ENCODE measurements at regions of chr16 and their contacts with region 1.

Region 1: DNA sequence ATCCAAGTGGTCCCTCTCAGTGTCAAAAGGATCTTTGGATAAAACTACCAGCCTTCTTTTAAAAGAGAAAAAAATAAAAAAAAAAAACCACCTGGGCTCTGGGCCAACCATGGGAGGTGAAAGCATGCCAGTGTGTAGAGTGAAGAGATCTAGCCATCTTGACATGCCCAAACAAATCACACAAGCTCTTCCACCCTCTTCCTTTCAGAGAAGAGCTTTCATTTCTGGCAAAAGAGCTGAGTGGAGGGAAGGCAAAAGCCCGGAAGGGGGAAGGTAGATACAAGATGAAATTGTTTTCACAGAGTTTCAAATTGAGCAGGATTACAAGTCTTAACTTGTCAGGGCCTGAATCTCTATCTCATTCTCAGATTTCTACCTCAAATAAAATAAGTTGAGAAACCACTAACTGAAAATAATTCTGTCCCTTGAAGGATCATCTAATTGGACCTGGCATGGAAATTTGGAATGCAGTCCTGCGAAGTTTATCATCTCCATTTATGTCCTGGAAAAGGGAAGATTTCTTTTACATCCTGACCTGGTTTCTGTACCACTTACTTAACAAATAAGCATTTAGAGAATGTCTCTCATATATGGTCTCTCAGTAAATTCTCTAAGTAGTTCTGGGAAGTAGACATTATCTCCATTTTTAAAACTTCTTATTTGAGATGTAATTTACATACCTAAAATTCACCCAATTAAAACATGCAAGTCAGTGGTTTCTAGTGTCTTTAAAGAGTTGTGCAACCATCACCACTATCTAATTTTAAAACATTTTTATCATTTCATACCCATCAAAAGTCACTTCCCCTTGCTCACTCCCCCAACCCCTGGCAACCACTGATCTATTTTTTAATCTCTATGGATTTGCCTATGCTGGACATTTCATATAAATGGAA is 93.7 kb downstream of the TANGO6 start:
- DNase-seq: peak; percentile 71
- H3K4me3 ChIP-seq: no peak overlapping the region
- H3K27ac ChIP-seq: peak overlapping the region; percentile 41 to 42
- H3K4me1 ChIP-seq: no peaks in the 10 kb centered on the region
- H3K27me3 ChIP-seq: no peaks in the 10 kb centered on the region
- CTCF ChIP-seq: peak in 1 of 4 experiments; percentile 8
- POLR2A ChIP-seq: no peak

Region 2: GRCh38 chr16:68528686-68529379 is 408.2 kb before region 1 on chr16:
- intact Hi-C with region 1: no loop called
- DNase-seq: peak; percentile 84
- H3K4me3 ChIP-seq: peak overlapping the region in 1 of 2 donors; percentile 9
- H3K27ac ChIP-seq: no peak overlapping the region
- H3K4me1 ChIP-seq: no peaks in the 10 kb centered on the region
- H3K27me3 ChIP-seq: no peaks in the 10 kb centered on the region
- CTCF ChIP-seq: peak; percentile 80 to 96 (median 90)
- POLR2A ChIP-seq: no peak

Region 3: DNA sequence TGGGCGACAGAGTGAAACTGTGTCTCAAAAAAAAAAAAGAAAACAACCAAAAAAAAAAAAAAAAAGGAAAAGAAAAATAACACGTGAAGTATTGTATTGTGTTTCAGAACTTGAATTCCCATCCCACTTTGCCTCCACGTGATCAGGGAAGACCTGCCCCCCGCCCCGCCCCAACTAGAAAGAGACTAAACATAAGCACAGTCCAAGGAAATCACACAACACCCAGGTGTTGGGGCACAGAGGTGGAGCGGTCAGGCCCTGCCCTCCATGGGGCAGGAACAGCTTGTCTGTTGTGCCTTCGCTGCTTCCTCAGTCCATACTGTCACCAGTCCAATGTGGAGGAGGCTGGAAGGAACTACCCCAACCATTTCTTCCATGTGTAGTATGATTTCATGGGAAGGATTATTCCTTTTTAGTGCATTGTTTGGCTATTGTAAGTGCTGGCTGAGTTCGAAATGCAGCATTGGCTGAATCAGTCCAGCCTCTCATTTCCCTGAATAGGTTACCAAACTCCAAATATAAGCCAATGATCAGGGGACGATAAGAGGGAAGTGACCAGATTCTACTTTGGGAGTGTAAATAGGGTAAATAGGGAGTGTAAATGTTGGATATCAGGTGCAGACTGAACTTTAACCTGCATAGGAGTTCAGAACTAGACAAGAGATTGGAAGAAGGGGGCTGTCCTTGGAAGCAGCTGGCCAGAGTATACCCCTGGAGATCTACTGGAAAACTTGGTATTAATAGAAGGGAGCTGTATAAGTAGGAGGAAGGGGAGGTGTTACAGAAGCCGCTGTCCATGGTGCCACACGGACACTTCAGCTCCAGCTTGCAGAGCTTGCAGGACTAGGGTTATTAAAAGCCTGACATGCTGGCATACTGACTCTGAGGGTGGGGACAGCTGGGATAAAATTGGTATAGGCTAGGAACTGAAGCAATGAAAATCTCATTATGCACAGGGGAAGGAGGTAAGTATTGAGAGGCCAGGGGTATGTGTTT is 43.0 kb before region 1 on chr16:
- intact Hi-C with region 1: loop called (anchors 5 kb)
- DNase-seq: no peak
- H3K4me3 ChIP-seq: no peak overlapping the region
- H3K27ac ChIP-seq: no peak overlapping the region
- H3K4me1 ChIP-seq: no peaks in the 10 kb centered on the region
- H3K27me3 ChIP-seq: no peaks in the 10 kb centered on the region
- CTCF ChIP-seq: no peak
- POLR2A ChIP-seq: no peak

Region 4: GRCh38 chr16:68907781-68908181 is 29.2 kb before region 1 on chr16:
- intact Hi-C with region 1: loop called (anchors 1 kb)
- DNase-seq: no peak
- H3K4me3 ChIP-seq: no peak overlapping the region
- H3K27ac ChIP-seq: peak overlapping the region; percentile 29 to 31
- H3K4me1 ChIP-seq: peaks cover 3% of the 10 kb centered on the region
- H3K27me3 ChIP-seq: no peaks in the 10 kb centered on the region
- CTCF ChIP-seq: no peak
- POLR2A ChIP-seq: no peak

Region 5: DNA sequence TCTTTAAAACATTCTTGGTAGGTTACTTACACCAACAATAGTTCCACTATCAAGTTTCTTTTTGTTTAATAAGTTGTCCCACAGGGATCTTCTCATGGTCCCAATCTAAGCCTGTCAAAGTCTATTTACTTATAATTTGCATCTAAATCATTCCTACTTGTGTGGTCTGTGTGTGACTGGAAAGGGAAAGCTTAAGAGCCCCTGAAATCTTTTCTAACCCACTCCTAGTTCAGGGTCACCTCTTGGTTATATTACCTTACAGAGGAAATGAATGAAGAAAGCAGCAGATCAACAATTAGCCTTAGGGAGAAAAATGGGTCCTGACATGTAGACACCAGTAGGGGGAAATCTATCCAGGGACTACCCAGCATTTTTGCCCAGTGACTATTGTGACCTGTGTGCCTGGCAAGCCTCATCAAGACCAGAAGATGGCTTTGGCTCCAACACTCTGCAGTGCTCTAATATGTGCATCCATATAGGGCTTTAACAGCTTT is 58.1 kb after region 1 on chr16:
- intact Hi-C with region 1: loop called (anchors 10 kb)
- DNase-seq: peak; percentile 34
- H3K4me3 ChIP-seq: no peak overlapping the region
- H3K27ac ChIP-seq: no peak overlapping the region
- H3K4me1 ChIP-seq: no peaks in the 10 kb centered on the region
- H3K27me3 ChIP-seq: no peaks in the 10 kb centered on the region
- CTCF ChIP-seq: peak in 2 of 4 experiments; percentile 13 to 38
- POLR2A ChIP-seq: no peak

Region 6: GRCh38 chr16:69073161-69073669 is 136.2 kb after region 1 on chr16:
- intact Hi-C with region 1: no loop called
- DNase-seq: no peak
- H3K4me3 ChIP-seq: no peak overlapping the region
- H3K27ac ChIP-seq: no peak overlapping the region
- H3K4me1 ChIP-seq: no peaks in the 10 kb centered on the region
- H3K27me3 ChIP-seq: no peaks in the 10 kb centered on the region
- CTCF ChIP-seq: no peak
- POLR2A ChIP-seq: no peak

Region 7: DNA sequence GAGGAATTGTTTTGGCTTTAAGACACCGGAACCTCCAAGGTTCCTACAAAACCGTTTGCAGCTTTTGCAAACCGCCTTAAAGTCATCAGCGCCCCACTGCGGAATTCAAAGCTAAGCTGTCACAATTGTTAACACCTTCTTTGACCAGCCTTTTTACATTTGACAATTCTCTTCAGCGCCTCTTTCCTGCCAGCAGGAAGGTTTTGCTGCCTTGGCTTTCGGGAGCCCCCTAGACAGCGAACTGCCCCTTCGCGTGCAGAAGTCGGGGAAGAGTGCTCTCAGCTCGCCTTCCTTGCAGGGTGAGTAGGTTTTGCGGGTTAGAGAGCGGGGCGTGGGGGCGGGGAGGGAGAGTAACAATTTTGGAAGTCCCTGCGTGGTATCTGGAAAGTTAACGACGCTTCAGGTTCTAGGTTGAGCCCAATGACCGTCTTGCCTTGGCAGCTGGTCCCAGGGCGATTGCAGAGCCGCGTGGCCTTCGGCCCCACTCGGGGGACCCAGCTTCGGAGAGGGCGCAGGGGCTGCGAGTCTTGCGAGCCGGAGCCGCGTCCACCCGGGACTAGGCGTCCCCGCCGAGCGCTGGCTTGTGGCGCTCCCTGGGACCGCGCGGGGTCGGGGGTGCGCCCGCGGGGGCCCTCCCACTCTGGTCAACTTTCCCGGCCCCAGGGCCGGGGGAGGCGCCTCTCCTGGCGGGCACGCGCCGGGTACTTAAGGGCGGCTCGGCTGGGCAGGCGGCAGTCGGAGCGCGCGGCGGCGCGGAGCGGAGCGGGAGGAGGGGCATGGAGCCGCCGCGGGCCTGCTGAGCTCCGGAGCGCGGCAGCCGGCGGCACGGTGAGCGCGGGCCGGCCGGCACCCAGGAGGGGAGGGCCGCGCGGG is 168.7 kb after region 1 on chr16 and contains the start of gene HAS3:
- intact Hi-C with region 1: loop called (anchors 5 kb)
- DNase-seq: peak; percentile 52
- H3K4me3 ChIP-seq: peak within 1 kb of the TSS; percentile 48 to 57
- H3K27ac ChIP-seq: peak within 1 kb of the TSS in 1 of 2 donors; percentile 39
- H3K4me1 ChIP-seq: peaks cover 15% of the 10 kb centered on the region
- H3K27me3 ChIP-seq: no peaks in the 10 kb centered on the region
- CTCF ChIP-seq: peak in 2 of 4 experiments; percentile 23 to 39
- POLR2A ChIP-seq: peak; percentile 56
- total RNA-seq, gene HAS3: 3.0 to 4.5 TPM

Region 8: GRCh38 chr16:69276148-69277115 is 339.4 kb after region 1 on chr16:
- intact Hi-C with region 1: no loop called
- DNase-seq: no peak
- H3K4me3 ChIP-seq: no peak overlapping the region
- H3K27ac ChIP-seq: no peak overlapping the region
- H3K4me1 ChIP-seq: no peaks in the 10 kb centered on the region
- H3K27me3 ChIP-seq: no peaks in the 10 kb centered on the region
- CTCF ChIP-seq: no peak
- POLR2A ChIP-seq: no peak